Posterior cingulate gyrus (tissue), 11 donors: ENCODE measurements at regions of chr20 and their contacts with region 1.

Region 1: DNA sequence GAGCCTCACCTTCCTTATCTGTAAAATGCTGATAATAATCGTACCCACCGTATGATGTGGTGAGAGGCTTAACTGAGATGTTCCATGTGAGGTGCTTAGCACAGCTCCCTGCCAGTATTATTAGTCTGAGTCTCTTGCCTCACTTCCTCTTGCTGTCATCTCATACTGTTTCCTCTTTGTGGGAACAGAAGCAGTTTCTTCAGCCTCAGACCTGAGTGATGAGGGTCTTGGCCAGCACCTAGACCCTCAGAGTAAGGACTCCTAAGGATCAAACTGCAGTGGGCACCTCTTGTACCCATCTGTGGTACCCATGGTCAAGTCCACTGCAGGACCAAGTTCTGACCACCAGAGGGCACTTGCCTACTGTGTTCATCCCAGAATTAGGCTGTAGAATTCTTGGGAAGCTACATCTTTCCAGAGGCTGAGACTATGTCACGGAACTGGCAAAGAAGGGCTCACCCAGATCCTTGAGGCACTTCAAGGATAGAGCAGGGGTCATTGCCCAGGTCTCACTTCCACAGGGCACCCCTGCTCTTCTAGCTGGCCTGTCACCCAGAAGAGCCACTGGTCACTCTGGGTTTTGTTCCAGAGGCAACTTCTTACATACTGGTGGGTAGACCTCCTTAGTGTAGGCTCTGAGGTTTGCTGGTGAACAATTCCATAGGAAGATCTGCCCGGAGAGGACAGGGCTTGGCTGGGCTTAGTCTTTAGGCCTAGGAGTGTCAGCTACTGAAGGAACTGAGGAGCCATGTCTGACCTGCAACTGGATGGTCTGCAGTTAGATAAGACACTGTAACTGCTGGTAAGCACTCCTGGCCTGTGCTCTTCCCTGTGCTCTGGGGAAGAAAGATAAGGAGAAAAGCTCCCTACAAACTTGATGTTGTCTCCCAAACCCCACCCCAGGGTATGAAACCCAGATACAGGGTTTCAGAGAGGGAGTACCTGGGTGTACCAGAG is 20.6 kb upstream of the SGK2 start:
- DNase-seq: peak; percentile 63 to 94 (median 84)

Region 2: DNA sequence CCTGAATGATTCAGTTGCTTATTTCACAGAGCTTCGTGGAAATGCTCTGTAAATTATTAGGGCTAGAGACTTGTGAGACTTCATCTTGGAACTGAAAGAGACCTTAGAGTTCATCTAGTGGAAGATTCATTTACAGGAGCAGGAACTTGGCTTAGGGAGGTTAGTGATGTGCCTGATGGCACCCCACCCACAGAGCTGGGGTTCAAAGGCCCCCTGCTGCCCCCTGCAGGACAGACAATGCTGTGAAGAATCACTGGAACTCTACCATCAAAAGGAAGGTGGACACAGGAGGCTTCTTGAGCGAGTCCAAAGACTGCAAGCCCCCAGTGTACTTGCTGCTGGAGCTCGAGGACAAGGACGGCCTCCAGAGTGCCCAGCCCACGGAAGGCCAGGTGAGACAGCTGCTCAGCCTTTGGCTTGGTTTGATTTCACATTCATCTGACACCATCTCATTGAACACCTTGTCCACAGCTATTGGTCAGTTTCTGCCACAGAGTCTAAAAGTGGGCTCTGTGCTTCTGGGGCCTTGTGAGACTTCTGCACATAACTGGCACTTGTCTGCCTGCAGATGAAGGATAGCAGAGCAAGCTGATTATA is 153.8 kb after region 1 on chr20:
- intact Hi-C with region 1: loop called (anchors 5 kb)
- DNase-seq: peak in 6 of 10 donors; percentile 18 to 89 (median 45)